ENCODE measurements at regions of chr15 and their contacts with region 1.

Region 1: GRCh38 chr15:49421991-49422390 is 1.1 kb upstream of the FGF7 start:
- DNase-seq: peak; percentile 70
- H3K4me3 Mint-ChIP-seq: peak overlapping the region; percentile 58
- H3K27ac Mint-ChIP-seq: no peak overlapping the region
- H3K4me1 Mint-ChIP-seq: peaks cover 7% of the 10 kb centered on the region
- H3K27me3 Mint-ChIP-seq: no peaks in the 10 kb centered on the region
- CTCF ChIP-seq: peak; percentile 72

Region 2: GRCh38 chr15:48861813-48862431 is 560.1 kb before region 1 on chr15:
- CTCF ChIA-PET with region 1: interaction called, 14 read pairs
- POLR2A ChIA-PET with region 1: no interaction called
- intact Hi-C with region 1: loop called (anchors 1 kb)
- DNase-seq: peak; percentile 72
- H3K4me3 Mint-ChIP-seq: no peak overlapping the region
- H3K27ac Mint-ChIP-seq: peak overlapping the region; percentile 61
- H3K4me1 Mint-ChIP-seq: peaks cover 29% of the 10 kb centered on the region
- H3K27me3 Mint-ChIP-seq: no peaks in the 10 kb centered on the region
- CTCF ChIP-seq: peak; percentile 73

Region 3: GRCh38 chr15:49235446-49236124 is 186.4 kb before region 1 on chr15:
- CTCF ChIA-PET with region 1: interaction called, 42 read pairs
- POLR2A ChIA-PET with region 1: no interaction called
- intact Hi-C with region 1: loop called (anchors 1 kb)
- DNase-seq: peak; percentile 69
- H3K4me3 Mint-ChIP-seq: no peak overlapping the region
- H3K27ac Mint-ChIP-seq: peak overlapping the region; percentile 35
- H3K4me1 Mint-ChIP-seq: peaks cover 9% of the 10 kb centered on the region
- H3K27me3 Mint-ChIP-seq: no peaks in the 10 kb centered on the region
- CTCF ChIP-seq: peak; percentile 74

Region 4: GRCh38 chr15:49255966-49256759 is 165.8 kb before region 1 on chr15:
- CTCF ChIA-PET with region 1: no interaction called
- POLR2A ChIA-PET with region 1: no interaction called
- intact Hi-C with region 1: no loop called
- DNase-seq: no peak
- H3K4me3 Mint-ChIP-seq: no peak overlapping the region
- H3K27ac Mint-ChIP-seq: no peak overlapping the region
- H3K4me1 Mint-ChIP-seq: peaks cover 5% of the 10 kb centered on the region
- H3K27me3 Mint-ChIP-seq: no peaks in the 10 kb centered on the region
- CTCF ChIP-seq: no peak

Region 5: DNA sequence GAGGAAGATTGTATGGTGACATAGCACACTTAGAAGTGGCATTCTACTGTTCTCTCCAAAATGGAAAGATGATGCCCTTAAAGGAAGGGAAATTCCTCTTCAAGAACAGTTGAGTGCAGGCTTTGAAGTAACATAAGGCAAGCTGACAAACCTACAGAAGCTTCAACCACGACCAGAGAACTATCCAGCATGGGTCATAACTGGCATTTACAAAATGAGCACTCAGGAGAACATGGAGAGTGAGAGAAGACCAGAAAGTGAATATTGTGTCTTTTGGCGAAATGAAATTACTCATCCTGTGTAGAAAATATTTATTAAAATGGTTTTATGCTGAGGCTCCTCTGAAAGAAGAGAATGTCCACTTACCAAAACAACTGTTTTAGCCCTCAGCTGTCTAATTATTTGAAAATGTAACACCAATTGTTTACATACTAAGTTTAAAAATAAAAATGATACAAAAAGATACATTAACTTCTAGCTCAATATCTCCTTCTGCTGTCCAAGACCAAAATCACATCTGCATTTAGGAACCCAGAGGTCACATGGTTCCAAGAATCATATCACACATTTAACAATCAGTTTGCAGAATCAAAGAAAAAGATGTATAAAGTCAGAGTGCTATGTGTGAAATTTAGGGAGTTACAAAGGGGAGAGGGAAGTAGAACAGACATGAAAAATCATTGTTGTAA is 480.1 kb after region 1 on chr15:
- CTCF ChIA-PET with region 1: interaction called, 15 read pairs
- POLR2A ChIA-PET with region 1: interaction called, 3 read pairs
- intact Hi-C with region 1: loop called (anchors 5 kb)
- DNase-seq: peak; percentile 43
- H3K4me3 Mint-ChIP-seq: no peak overlapping the region
- H3K27ac Mint-ChIP-seq: peak overlapping the region; percentile 14
- H3K4me1 Mint-ChIP-seq: peaks cover 10% of the 10 kb centered on the region
- H3K27me3 Mint-ChIP-seq: no peaks in the 10 kb centered on the region
- CTCF ChIP-seq: peak; percentile 52

Region 6: GRCh38 chr15:50051803-50052419 is 629.9 kb after region 1 on chr15:
- CTCF ChIA-PET with region 1: interaction called, 5 read pairs
- POLR2A ChIA-PET with region 1: no interaction called
- intact Hi-C with region 1: loop called (anchors 2 kb)
- DNase-seq: peak; percentile 79
- H3K4me3 Mint-ChIP-seq: no peak overlapping the region
- H3K27ac Mint-ChIP-seq: peak overlapping the region; percentile 51
- H3K4me1 Mint-ChIP-seq: peaks cover 11% of the 10 kb centered on the region
- H3K27me3 Mint-ChIP-seq: no peaks in the 10 kb centered on the region
- CTCF ChIP-seq: peak; percentile 79

Measured in MCF 10A (cell line).